GM23248 (cell line): ENCODE measurements at regions of chr11 and their contacts with region 1.

Region 1: GRCh38 chr11:35822815-35823495 is 120.9 kb upstream of the LDLRAD3 start:
- DNase-seq: no peak
- H3K4me3 ChIP-seq: no peak overlapping the region
- H3K27ac ChIP-seq: no peak overlapping the region
- H3K4me1 ChIP-seq: no peaks in the 10 kb centered on the region
- H3K27me3 ChIP-seq: no peaks in the 10 kb centered on the region

Region 2: DNA sequence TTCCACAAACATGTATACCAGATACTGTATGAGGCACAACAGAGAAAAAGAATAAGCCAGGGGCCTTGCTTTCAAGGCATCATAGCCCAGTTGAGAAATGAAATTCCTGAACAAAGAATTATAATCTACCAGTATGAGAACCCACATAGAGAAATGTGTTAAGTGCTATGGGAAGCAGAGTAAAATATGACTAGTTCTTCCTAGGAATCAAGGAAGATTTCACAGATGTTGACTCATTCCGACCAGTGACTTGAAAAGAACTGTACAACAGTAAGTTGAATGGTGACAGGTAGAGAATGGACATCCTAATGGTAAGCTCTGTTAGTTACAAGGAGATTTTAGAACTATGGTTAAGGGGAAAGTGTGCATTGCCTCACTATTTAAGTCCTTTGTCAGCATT is 57.7 kb before region 1 on chr11:
- in situ Hi-C with region 1: no loop called
- DNase-seq: peak; percentile 47
- H3K4me3 ChIP-seq: no peak overlapping the region
- H3K27ac ChIP-seq: no peak overlapping the region
- H3K4me1 ChIP-seq: no peaks in the 10 kb centered on the region
- H3K27me3 ChIP-seq: no peaks in the 10 kb centered on the region

Region 3: GRCh38 chr11:36265793-36266628 is 443.1 kb after region 1 on chr11:
- in situ Hi-C with region 1: loop called (anchors 10 kb)
- DNase-seq: peak; percentile 61
- H3K4me3 ChIP-seq: no peak overlapping the region
- H3K27ac ChIP-seq: no peak overlapping the region
- H3K4me1 ChIP-seq: no peaks in the 10 kb centered on the region
- H3K27me3 ChIP-seq: peaks cover 19% of the 10 kb centered on the region